Mucosa of descending colon (tissue), 3 donors: ENCODE measurements at regions of chr14 and their contacts with region 1.

Region 1: DNA sequence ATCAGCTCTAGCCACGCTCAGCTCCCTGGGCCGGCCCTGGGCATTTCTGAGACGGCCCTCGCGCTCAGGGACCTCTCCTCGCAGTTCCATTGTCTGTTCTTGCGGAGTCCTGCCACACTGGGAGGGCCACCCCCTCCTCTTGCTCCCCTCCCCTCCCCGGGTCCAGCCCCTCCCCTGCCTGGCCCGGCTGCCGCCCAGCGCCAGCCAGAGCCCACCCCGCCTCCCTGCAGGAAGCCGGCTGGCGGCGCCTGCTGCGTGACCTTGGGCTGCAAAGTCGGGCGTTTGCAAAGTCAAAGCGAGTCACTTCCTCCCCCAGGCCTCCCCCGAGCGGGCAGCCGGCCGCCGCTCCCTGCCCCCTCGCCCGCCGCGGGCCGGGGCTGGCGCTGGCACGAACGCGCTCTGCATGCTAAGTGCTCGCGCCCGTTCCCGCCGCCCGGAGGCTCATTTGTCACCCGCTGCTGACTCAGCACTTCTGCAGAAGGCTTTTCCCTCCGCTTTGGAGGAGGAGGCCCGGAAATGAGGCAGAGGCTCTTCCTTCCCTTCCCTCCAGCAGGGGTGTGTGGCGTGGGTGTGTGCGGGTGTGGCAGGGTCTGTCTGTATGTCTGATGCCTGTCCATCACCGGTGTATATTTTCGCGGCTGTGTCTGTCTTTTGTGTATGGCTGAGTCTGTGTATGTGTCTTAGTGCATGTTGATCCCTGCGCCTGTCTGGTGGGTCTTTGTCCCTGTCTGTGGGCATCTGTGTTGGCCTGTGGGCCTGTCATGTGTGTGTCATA is 72.0 kb downstream of the IRF2BPL start:
- DNase-seq: peak; percentile 92 to 94 (median 92)
- ATAC-seq: peak; percentile 82
- H3K4me3 ChIP-seq: no peak overlapping the region
- H3K4me1 ChIP-seq: peaks cover 43% of the 10 kb centered on the region
- CTCF ChIP-seq: no peak

Region 2: DNA sequence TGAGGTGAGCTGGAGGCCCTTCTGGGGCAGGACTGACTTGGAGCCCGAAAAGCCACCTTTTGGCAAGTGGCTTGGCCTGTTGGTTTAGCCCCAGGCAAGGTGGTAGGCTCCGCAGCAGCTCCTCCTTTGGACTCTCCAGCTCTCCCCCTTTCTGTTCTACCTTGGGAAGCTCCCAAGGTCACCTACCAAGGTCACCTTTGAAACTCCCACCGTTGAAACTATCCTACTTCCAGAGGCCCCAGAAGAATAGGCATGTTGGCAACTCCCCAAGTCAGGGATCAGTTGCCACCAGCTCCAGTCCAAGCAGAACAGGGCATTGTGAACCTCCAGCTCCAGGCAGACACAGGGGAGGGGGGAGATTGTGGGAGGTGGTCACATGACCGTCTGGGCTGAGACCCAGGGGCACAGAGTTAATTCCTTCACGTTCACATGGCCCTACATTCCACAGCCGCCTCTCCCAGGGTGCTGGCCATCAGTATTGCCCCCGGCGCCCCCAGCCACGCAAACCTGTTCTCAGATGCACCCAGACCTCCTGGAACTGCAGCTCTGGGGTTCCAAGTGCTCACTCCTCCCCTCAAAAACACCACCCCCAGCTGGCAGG is 57.6 kb after region 1 on chr14:
- intact Hi-C with region 1: loop called in 1 of 2 experiments (anchors 10 kb)
- DNase-seq: no peak
- ATAC-seq: no peak
- H3K4me3 ChIP-seq: no peak overlapping the region
- H3K4me1 ChIP-seq: peaks cover 20% of the 10 kb centered on the region
- CTCF ChIP-seq: no peak

Region 3: GRCh38 chr14:77028384-77029231 is 72.1 kb after region 1 on chr14 and contains the start of gene IRF2BPL:
- intact Hi-C with region 1: loop called in 1 of 2 experiments (anchors 5 kb)
- DNase-seq: peak; percentile 99 to 100 (median 99)
- ATAC-seq: peak; percentile 78
- H3K4me3 ChIP-seq: peak within 1 kb of the TSS; percentile 46
- H3K4me1 ChIP-seq: peaks cover 47% of the 10 kb centered on the region
- CTCF ChIP-seq: no peak
- total RNA-seq, gene IRF2BPL: 15.1 to 74.1 (median 19.3) TPM